Activated CD8-positive, alpha-beta memory T cell treated with anti-CD3 and anti-CD28 coated beads, Interleukin-2, amount 10 ng/mL, durations not matched to agents 7 days and 5 days (primary cell): ENCODE measurements at regions of chr19 and their contacts with region 1.

Region 1: GRCh38 chr19:39474139-39474622 is 6.5 kb upstream of the TIMM50 start:
- DNase-seq: peak; percentile 67
- ATAC-seq: peak; percentile 83
- H3K4me3 Mint-ChIP-seq: no peak overlapping the region
- H3K27ac Mint-ChIP-seq: no peak overlapping the region
- H3K4me1 Mint-ChIP-seq: peaks cover 11% of the 10 kb centered on the region
- H3K27me3 Mint-ChIP-seq: no peaks in the 10 kb centered on the region

Region 2: GRCh38 chr19:39463403-39463802 is 10.8 kb before region 1 on chr19:
- CTCF ChIA-PET with region 1: interaction called, 19 read pairs
- DNase-seq: no peak
- ATAC-seq: no peak
- H3K4me3 Mint-ChIP-seq: no peak overlapping the region
- H3K27ac Mint-ChIP-seq: no peak overlapping the region
- H3K4me1 Mint-ChIP-seq: peaks cover 2% of the 10 kb centered on the region
- H3K27me3 Mint-ChIP-seq: no peaks in the 10 kb centered on the region

Region 3: DNA sequence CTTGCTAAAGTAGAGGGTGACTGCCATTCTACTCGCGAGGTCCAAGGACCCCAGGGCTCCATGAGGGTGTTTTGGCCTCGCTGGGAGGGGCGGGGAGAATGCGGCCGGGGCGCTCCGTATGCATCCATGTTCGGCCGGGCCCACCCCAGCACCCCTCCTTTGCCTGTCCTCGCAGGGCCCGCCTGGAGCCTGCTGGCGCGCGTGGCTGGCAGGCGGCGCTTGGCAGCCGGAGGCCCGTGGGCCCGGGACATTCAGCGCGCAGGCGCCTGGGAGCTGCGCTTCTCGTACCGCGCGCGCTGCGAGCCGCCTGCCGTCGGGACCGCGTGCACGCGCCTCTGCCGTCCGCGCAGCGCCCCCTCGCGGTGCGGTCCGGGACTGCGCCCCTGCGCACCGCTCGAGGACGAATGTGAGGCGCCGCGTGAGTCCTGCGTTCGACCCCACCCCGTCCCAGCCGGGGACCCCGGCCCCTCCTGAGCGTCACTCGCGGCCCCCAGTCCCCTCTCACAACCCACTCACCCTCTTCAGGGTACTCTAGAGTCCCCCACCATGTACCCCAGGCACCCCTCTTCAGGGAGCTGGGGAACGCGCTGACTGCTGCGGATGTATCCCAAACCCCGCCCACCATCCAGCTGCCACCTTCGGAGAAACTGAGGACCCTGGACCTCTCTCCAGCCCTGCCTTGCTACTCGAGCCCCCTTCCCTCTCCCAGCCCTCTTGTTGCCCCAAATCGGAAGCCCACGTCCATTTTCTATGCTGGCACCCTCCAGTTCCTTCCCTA is 28.6 kb after region 1 on chr19:
- CTCF ChIA-PET with region 1: interaction called, 10 read pairs
- DNase-seq: peak; percentile 76
- ATAC-seq: peak; percentile 71
- H3K4me3 Mint-ChIP-seq: no peak overlapping the region
- H3K27ac Mint-ChIP-seq: no peak overlapping the region
- H3K4me1 Mint-ChIP-seq: peaks cover 30% of the 10 kb centered on the region
- H3K27me3 Mint-ChIP-seq: peaks cover 68% of the 10 kb centered on the region